Gastrocnemius medialis (tissue), 4 donors: ENCODE measurements at regions of chr1 and their contacts with region 1.

Region 1: GRCh38 chr1:11099310-11100149 is at the start of gene EXOSC10:
- DNase-seq: peak; percentile 80 to 86
- ATAC-seq: peak; percentile 97 to 98
- H3K4me3 ChIP-seq: peak within 1 kb of the TSS; percentile 84 to 99 (median 98)
- H3K27ac ChIP-seq: peak within 1 kb of the TSS; percentile 84 to 86 (median 85)
- H3K4me1 ChIP-seq: peaks cover 15% of the 10 kb centered on the region in 2 donors
- H3K27me3 ChIP-seq: no peaks in the 10 kb centered on the region
- CTCF ChIP-seq: no peak
- POLR2A ChIP-seq: peak in 1 of 2 donors; percentile 28
- total RNA-seq, gene EXOSC10: 26.5 to 44.4 (median 40.3) TPM

Region 2: GRCh38 chr1:11037740-11038182 is 61.8 kb before region 1 on chr1:
- in situ Hi-C with region 1: no loop called
- intact Hi-C with region 1: loop called (anchors 2 kb)
- DNase-seq: peak; percentile 71 to 80
- ATAC-seq: peak; percentile 93
- H3K4me3 ChIP-seq: peak overlapping the region in 1 of 4 donors; percentile 31
- H3K27ac ChIP-seq: peak overlapping the region in 2 of 4 donors; percentile 30 to 56
- H3K4me1 ChIP-seq: peaks cover 8 to 10% of the 10 kb centered on the region in 2 donors
- H3K27me3 ChIP-seq: no peaks in the 10 kb centered on the region
- CTCF ChIP-seq: peak; percentile 86 to 98 (median 94)
- POLR2A ChIP-seq: no peak

Region 3: DNA sequence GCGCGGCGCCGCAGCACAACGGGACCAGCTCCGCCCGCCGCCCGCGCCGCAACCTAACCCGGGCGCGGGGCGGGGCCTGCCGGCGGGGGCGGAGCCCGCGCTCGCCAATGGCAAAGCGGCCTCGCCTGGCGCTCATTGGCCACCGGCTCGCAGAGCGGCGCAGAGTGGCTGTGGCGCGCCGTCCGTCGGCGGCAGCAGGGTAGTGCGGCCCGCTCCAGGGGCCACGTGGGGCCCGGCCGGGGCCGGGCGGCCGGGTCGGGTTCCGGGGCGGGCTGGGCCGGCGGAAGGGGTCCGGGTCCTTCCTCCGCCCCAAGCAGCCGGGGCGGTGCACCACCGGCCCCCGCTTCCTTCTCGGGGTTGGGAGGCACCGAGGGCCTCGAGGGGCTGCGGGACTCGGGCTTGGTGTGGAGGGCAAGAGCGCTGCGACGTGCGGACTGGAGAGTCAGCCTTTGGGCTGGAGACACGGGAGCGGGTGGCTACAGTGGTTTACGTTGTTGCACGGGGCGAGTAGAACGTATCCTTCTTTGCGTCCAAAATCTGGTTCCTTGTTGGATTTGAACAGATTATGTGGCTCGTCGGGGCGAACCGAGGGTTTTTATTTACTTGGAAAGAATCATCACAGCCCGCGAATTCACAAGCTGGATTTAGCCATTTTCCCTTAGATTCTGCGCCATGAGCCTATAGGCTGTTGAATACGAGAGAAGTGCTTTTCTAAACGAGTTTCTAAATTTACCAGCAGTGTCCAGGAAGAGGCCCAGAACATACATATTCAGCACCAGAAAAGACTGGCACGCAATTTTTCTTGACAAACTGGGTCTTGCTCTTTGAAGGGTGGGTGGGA is 39.3 kb before region 1 on chr1 and contains the start of gene SRM:
- in situ Hi-C with region 1: no loop called
- intact Hi-C with region 1: loop called (anchors 1 kb)
- DNase-seq: peak; percentile 76 to 87
- ATAC-seq: peak; percentile 93 to 95
- H3K4me3 ChIP-seq: peak within 1 kb of the TSS; percentile 73 to 100 (median 94)
- H3K27ac ChIP-seq: peak within 1 kb of the TSS; percentile 77 to 95 (median 92)
- H3K4me1 ChIP-seq: peaks cover 18 to 19% of the 10 kb centered on the region in 2 donors
- H3K27me3 ChIP-seq: no peaks in the 10 kb centered on the region
- CTCF ChIP-seq: peak in 4 of 5 experiments; percentile 78 to 84 (median 82)
- POLR2A ChIP-seq: peak; percentile 73 to 84
- total RNA-seq, gene SRM: 32.1 to 80.3 (median 48.3) TPM

Region 4: DNA sequence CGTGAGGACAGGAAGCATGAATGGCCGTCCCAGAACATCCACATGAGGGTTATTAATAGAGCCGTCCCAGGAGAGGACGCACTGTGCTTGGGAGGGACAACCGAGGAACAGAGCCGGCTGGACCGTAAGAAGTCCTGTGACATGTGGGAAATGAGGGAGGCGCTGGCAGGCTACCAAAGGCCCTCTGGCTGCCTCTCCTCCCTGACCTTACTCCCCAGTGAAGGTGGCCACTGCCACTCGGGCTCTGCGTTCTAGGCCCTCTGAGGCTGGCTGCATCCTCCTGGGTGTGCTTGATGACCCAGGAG is 774.7 kb after region 1 on chr1:
- in situ Hi-C with region 1: no loop called
- intact Hi-C with region 1: no loop called
- DNase-seq: peak; percentile 96
- ATAC-seq: peak; percentile 94 to 97
- H3K4me3 ChIP-seq: no peak overlapping the region
- H3K27ac ChIP-seq: peak overlapping the region; percentile 75 to 95 (median 83)
- H3K4me1 ChIP-seq: peaks cover 26 to 42% of the 10 kb centered on the region in 2 donors
- H3K27me3 ChIP-seq: no peaks in the 10 kb centered on the region
- CTCF ChIP-seq: no peak
- POLR2A ChIP-seq: peak in 1 of 2 donors; percentile 4